Activated CD4-positive, alpha-beta T cell treated with anti-CD3 and anti-CD28 coated beads for 36 hours (primary cell): ENCODE measurements at regions of chr1 and their contacts with region 1.

Region 1: DNA sequence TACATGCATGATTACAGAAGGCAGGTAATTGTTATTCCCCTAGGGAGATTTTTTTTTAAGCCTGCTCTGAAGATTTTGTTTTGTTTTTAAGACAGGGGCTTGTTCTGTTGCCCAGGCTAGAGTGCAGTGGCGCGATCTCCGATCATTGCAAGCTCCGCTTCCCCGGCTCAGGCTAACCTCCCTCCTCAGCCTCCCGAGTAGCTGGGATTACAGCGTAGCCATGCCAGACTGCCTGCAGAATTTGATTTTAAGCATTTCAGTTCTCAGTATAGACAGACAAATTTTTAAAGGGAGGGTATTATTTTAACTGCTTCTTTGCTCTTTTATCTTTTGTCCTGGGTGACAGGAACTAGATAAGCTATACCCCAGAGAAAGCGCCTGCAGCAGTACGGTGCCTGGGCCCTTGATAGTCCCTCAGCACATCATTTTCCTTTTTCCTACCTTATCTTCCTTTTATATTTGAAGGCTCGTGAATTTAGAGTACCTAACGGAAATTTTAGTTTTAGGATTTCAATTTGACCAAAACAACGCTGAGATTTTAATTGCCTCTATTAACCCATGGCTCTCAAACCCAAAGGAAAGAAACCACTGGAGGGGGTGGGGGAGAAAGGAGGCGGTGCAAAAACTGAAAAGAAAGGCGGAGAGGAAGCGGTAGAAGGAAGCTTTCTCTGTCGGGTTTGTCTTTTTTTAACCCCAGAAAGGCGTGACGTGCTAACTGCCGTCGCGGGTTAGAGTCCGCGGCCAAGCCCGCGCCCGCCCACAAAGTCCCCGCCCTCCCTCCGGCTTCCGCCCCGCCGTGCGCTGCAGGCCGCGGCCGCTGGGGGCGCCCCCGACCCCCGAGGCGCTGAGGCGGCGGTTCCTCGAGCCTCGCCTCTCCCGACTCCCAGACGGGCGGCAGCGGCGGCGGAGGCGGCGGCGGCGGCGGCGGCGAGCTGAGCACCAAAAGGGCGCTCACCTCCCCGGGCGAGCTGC is at the start of gene EEIG2:
- DNase-seq: peak; percentile 94
- ATAC-seq: peak; percentile 84
- H3K4me3 Mint-ChIP-seq: peak within 1 kb of the TSS; percentile 90
- H3K27ac Mint-ChIP-seq: peak within 1 kb of the TSS; percentile 81
- H3K4me1 Mint-ChIP-seq: peaks cover 41% of the 10 kb centered on the region
- H3K27me3 Mint-ChIP-seq: no peaks in the 10 kb centered on the region
- total RNA-seq, gene EEIG2: 5.0 to 7.6 TPM

Region 2: GRCh38 chr1:108504447-108504846 is 55.1 kb before region 1 on chr1:
- CTCF ChIA-PET with region 1: interaction called, 109 read pairs
- POLR2A ChIA-PET with region 1: no interaction called
- intact Hi-C with region 1: loop called (anchors 2 kb)
- DNase-seq: peak; percentile 16
- ATAC-seq: peak; percentile 95
- H3K4me3 Mint-ChIP-seq: no peak overlapping the region
- H3K27ac Mint-ChIP-seq: no peak overlapping the region
- H3K4me1 Mint-ChIP-seq: no peaks in the 10 kb centered on the region
- H3K27me3 Mint-ChIP-seq: peaks cover 36% of the 10 kb centered on the region

Region 3: GRCh38 chr1:108541861-108542260 is 17.6 kb before region 1 on chr1:
- CTCF ChIA-PET with region 1: interaction called, 16 read pairs
- POLR2A ChIA-PET with region 1: no interaction called
- intact Hi-C with region 1: no loop called
- DNase-seq: no peak
- ATAC-seq: no peak
- H3K4me3 Mint-ChIP-seq: no peak overlapping the region
- H3K27ac Mint-ChIP-seq: no peak overlapping the region
- H3K4me1 Mint-ChIP-seq: no peaks in the 10 kb centered on the region
- H3K27me3 Mint-ChIP-seq: peaks cover 15% of the 10 kb centered on the region

Region 4: DNA sequence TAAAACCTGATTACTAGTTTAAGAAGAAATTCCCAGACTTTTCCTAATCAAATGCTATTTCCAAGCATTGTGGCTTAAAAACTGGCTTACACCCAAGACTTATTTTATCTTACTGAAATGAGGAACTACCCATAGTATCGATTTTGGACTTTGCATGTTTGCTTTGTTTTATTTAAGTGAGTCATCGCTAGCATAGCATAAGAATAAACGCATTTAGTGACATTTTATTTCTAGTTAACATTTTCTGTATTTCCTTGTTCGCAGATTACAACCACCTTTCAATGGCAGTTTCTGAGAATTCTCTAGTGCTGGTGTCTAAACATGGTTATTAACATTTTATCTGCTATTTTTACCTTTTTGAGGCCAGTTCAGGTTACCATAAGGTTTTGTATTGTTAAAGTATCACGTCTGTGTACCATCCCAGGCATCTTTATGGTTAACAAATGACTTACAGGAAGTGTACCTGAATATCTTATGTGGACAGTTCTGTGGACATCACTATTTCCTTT is 24.9 kb after region 1 on chr1:
- CTCF ChIA-PET with region 1: interaction called, 15 read pairs
- POLR2A ChIA-PET with region 1: no interaction called
- intact Hi-C with region 1: no loop called
- DNase-seq: no peak
- ATAC-seq: no peak
- H3K4me3 Mint-ChIP-seq: no peak overlapping the region
- H3K27ac Mint-ChIP-seq: no peak overlapping the region
- H3K4me1 Mint-ChIP-seq: peaks cover 42% of the 10 kb centered on the region
- H3K27me3 Mint-ChIP-seq: no peaks in the 10 kb centered on the region

Region 5: DNA sequence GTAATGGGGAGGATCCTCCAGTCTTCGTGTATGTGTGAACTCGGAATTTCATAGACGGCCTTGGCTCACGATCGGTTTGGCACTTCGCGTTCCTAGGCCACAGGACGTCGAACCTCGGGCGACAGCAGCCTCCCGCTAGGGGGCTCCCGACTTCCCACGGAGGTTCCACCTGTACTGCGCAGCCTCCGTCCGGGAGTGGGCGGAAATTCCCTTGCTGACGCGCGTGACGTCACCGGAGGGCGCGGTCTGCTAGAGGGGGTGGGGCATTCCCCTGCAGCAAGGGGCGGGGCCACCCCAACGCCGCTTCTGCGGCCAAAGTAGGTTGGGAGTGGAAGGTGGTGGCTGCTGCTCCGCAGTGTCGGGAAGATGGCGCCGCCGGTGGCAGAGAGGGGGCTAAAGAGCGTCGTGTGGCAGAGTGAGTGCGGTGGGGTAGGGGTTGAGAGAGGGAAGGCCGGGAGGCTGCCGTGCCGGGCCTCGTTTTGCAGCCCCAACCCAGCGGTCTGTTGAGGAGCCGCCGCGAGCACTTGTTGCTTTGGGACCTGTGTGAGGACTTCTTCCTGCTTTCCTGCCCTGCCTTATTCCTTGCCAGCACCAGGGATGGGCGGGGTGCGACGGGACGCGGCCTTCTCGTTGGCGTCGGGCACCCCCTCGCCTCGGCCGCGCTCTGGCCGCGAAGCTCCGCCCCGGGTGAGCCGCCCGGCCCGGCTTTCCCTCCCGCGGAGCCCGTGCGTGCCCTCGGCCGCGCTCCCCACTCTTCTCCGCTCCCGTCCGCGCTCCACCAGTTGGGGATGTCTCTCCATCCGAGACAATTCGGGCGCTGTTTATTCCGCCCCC is 187.1 kb after region 1 on chr1 and contains the start of gene STXBP3:
- CTCF ChIA-PET with region 1: no interaction called
- POLR2A ChIA-PET with region 1: no interaction called
- intact Hi-C with region 1: loop called (anchors 1 to 2 kb)
- DNase-seq: peak; percentile 100
- ATAC-seq: peak; percentile 94
- H3K4me3 Mint-ChIP-seq: peak within 1 kb of the TSS; percentile 96
- H3K27ac Mint-ChIP-seq: peak within 1 kb of the TSS; percentile 99
- H3K4me1 Mint-ChIP-seq: peaks cover 29% of the 10 kb centered on the region
- H3K27me3 Mint-ChIP-seq: no peaks in the 10 kb centered on the region
- total RNA-seq, gene STXBP3: 38.9 to 39.3 TPM

Region 6: GRCh38 chr1:108758796-108759195 is 199.3 kb after region 1 on chr1:
- CTCF ChIA-PET with region 1: no interaction called
- POLR2A ChIA-PET with region 1: no interaction called
- intact Hi-C with region 1: no loop called
- DNase-seq: no peak
- ATAC-seq: no peak
- H3K4me3 Mint-ChIP-seq: no peak overlapping the region
- H3K27ac Mint-ChIP-seq: no peak overlapping the region
- H3K4me1 Mint-ChIP-seq: peaks cover 5% of the 10 kb centered on the region
- H3K27me3 Mint-ChIP-seq: no peaks in the 10 kb centered on the region